Activated CD4-positive, alpha-beta T cell treated with anti-CD3 and anti-CD28 coated beads for 36 hours (primary cell): ENCODE measurements at regions of chr22 and their contacts with region 1.

Region 1: DNA sequence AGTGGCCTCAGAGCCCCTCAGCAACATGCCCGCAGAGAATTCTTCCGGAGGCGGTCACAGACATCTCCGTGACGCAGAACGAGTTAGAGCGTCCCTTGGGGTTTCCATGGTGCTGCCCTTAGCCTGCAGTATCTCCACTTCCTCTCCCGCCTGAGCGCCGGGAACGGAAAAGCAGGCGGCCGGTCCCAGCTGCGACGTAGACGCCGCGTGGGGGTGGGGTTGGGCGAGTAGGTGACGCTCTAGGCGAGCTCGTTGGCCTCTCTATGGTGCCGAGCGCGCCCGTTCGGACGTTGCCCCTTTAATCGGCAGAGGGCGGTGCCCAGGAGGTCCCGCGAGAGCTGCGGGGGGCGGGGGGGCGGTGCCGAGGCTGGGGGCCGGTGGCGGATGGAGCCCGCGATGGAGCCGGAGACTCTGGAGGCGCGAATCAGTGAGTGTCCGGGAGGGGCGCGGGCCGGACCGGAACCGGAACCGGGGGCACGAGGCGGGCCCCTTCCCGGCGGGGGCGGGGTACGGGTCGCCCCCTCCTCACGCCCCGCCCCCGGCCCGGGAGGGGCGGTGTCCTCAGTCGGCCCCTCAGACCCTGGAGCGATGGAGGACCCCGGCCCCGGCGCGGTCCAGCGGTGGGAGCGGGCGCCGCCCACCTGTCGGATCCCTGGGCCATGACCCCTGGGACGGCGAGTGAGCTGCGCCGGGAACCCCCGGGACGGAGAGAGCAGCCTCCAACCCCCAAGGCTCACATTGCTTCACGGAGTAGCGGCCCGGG is at the start of gene GGA1:
- DNase-seq: peak; percentile 99
- ATAC-seq: peak; percentile 82
- H3K4me3 Mint-ChIP-seq: peak within 1 kb of the TSS; percentile 89
- H3K27ac Mint-ChIP-seq: peak within 1 kb of the TSS; percentile 99
- H3K4me1 Mint-ChIP-seq: peaks cover 51% of the 10 kb centered on the region
- H3K27me3 Mint-ChIP-seq: no peaks in the 10 kb centered on the region
- total RNA-seq, gene GGA1: 55.4 to 66.6 TPM

Region 2: DNA sequence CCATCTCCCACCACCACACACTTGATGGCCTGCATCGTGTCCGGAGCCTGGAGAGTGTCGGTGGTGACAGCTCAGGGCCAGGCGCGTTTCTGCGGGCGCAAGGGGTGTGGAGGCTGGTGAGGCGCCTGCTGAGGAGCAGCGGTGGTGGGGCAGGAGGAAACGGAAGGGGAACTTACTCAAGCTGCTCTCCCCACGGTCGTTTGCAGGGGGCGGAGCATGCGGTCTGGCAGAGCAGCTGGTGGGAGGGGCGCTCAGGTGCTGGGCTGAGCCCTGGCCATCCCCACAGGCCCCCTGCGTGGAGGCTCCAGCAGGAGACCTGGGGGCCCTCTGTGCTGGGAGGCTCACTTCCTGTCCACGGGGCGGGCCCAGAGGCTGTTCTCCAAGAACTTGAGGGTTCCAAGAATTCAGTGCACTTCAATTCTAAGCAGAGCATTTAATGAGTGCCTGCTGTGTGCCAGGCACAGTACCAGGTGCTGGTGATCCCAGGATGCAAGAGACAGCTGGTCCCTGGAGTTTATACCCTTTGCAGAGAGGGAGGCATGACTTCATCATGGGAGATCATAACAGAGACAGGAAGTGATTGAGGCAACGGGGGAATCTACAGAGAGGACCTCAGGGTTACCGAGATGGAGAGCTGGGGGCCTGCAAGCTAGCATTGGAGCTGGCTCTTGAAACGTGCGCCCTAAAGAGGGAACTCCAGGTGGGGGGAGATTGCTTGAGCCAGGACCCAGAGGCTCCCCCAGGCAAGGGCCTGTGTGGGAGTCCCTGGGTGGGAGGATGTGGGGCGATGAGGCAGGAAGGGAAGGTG is 364.3 kb before region 1 on chr22 and contains the start of gene RAC2:
- CTCF ChIA-PET with region 1: no interaction called
- POLR2A ChIA-PET with region 1: no interaction called
- intact Hi-C with region 1: loop called in 1 of 2 experiments (anchors 1 kb)
- DNase-seq: peak; percentile 97
- ATAC-seq: peak; percentile 60
- H3K4me3 Mint-ChIP-seq: peak within 1 kb of the TSS; percentile 92
- H3K27ac Mint-ChIP-seq: peak within 1 kb of the TSS; percentile 94
- H3K4me1 Mint-ChIP-seq: peaks cover 47% of the 10 kb centered on the region
- H3K27me3 Mint-ChIP-seq: no peaks in the 10 kb centered on the region
- total RNA-seq, gene RAC2: 692 to 930 TPM

Region 3: GRCh38 chr22:37588546-37589215 is 20.0 kb before region 1 on chr22:
- CTCF ChIA-PET with region 1: interaction called, 61 read pairs
- POLR2A ChIA-PET with region 1: interaction called, 9 read pairs
- intact Hi-C with region 1: loop called in 1 of 2 experiments (anchors 1 kb)
- DNase-seq: no peak
- ATAC-seq: no peak
- H3K4me3 Mint-ChIP-seq: no peak overlapping the region
- H3K27ac Mint-ChIP-seq: no peak overlapping the region
- H3K4me1 Mint-ChIP-seq: peaks cover 10% of the 10 kb centered on the region
- H3K27me3 Mint-ChIP-seq: no peaks in the 10 kb centered on the region

Region 4: DNA sequence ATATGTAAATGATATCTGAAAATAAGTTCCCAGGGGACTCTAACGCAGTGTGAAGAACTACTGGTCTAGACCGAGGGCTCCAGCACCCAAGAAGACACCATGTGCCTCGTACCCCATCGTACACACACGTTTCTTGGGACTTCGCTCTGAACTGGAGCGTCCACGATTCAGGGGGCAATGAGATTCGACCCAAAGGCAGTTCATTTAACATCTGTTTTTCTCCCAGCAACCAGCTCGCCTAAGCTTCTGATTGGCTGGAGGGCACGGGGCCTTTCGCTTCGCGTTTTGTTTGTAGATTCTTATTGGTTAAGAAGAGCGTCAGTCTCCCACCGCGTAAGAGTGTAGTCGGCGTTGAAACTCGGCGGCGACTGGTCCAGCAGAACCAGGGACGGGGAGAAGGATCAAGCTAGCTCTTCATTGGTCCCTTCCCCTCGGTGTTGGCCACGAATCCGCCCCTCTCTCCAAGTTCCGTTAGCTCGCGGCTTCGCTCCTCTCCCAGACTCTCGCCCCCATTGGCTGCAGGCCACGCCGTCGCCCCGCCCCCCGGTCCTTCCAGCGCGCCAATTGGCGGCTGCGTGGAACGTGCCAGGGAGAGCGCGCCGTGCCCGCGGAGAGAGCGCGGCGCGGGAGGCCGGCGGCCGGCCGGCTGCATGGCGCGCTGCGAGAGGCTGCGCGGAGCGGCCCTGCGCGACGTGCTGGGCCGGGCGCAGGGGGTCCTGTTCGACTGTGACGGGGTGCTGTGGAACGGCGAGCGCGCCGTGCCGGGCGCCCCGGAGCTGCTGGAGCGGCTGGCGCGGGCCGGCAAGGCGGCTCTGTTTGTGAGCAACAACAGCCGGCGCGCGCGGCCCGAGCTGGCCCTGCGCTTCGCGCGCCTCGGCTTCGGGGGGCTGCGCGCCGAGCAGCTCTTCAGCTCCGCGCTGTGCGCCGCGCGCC is 49.7 kb after region 1 on chr22 and contains the start of gene PDXP:
- CTCF ChIA-PET with region 1: interaction called, 7 read pairs
- POLR2A ChIA-PET with region 1: interaction called, 16 read pairs
- intact Hi-C with region 1: loop called in 1 of 2 experiments (anchors 1 kb)
- DNase-seq: peak; percentile 99
- ATAC-seq: peak; percentile 98
- H3K4me3 Mint-ChIP-seq: peak within 1 kb of the TSS; percentile 86
- H3K27ac Mint-ChIP-seq: peak within 1 kb of the TSS; percentile 91
- H3K4me1 Mint-ChIP-seq: peaks cover 31% of the 10 kb centered on the region
- H3K27me3 Mint-ChIP-seq: no peaks in the 10 kb centered on the region
- total RNA-seq, gene PDXP: 35.8 to 37.8 TPM

Region 5: GRCh38 chr22:37745548-37746365 is 137.1 kb after region 1 on chr22:
- CTCF ChIA-PET with region 1: no interaction called
- POLR2A ChIA-PET with region 1: no interaction called
- intact Hi-C with region 1: loop called in 1 of 2 experiments (anchors 1 kb)
- DNase-seq: peak; percentile 95
- ATAC-seq: peak; percentile 91
- H3K4me3 Mint-ChIP-seq: peak overlapping the region; percentile 84
- H3K27ac Mint-ChIP-seq: peak overlapping the region; percentile 90
- H3K4me1 Mint-ChIP-seq: peaks cover 25% of the 10 kb centered on the region
- H3K27me3 Mint-ChIP-seq: no peaks in the 10 kb centered on the region

Region 6: DNA sequence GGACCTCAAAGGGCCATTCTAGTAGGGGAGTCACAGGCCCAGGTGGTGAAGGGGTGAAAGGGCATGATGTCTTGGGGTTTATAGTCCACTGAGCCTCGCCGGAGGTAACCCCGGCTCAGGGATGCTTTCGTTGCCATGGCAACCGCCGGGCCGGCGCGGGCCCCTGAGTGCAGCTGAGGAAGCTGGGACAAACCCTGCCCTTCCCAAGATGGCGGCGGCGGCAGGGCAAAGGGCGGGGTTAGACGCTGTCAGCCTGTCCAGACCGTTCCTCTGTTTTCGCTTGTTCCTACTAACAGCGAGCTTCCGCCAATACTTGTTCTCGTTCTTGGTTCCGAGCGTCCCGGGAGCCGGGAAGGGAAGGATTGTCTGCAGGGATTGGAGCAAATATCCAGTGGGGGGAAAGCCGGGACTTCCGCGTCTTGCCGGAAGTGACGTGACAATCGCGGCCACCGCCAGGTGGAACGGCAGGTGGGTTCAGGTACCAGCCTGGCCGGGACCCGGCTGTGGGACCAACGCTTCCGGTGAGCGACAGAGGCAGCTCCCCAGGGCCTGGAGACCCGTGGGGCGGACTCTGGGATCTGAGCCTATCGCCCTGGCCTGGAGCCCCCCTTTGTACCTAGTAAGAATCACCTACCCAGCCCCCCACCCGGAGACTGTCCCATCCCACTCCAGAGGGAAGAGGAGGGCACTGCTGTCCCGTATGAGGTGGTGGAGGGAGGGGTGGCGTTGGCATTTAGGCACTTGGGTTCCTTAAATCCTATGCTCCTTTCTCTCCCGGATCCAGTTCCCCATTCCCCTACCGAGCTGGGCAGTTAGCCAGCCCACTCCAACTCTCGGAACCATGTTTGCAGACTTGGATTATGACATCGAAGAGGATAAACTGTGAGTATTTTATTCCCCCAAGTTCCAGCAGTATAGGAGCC is 448.6 kb after region 1 on chr22 and contains the start of gene PICK1:
- CTCF ChIA-PET with region 1: no interaction called
- POLR2A ChIA-PET with region 1: no interaction called
- intact Hi-C with region 1: loop called in 1 of 2 experiments (anchors 2 kb)
- DNase-seq: peak; percentile 92
- ATAC-seq: peak; percentile 93
- H3K4me3 Mint-ChIP-seq: peak within 1 kb of the TSS; percentile 88
- H3K27ac Mint-ChIP-seq: peak within 1 kb of the TSS; percentile 98
- H3K4me1 Mint-ChIP-seq: peaks cover 15% of the 10 kb centered on the region
- H3K27me3 Mint-ChIP-seq: no peaks in the 10 kb centered on the region
- total RNA-seq, gene PICK1: 14.9 to 17.2 TPM